Activated CD8-positive, alpha-beta T cell treated with anti-CD3 and anti-CD28 coated beads, Interleukin-2, amount 10 ng/mL, durations not matched to agents 7 days and 5 days (primary cell): ENCODE measurements at regions of chr3 and their contacts with region 1.

Region 1: DNA sequence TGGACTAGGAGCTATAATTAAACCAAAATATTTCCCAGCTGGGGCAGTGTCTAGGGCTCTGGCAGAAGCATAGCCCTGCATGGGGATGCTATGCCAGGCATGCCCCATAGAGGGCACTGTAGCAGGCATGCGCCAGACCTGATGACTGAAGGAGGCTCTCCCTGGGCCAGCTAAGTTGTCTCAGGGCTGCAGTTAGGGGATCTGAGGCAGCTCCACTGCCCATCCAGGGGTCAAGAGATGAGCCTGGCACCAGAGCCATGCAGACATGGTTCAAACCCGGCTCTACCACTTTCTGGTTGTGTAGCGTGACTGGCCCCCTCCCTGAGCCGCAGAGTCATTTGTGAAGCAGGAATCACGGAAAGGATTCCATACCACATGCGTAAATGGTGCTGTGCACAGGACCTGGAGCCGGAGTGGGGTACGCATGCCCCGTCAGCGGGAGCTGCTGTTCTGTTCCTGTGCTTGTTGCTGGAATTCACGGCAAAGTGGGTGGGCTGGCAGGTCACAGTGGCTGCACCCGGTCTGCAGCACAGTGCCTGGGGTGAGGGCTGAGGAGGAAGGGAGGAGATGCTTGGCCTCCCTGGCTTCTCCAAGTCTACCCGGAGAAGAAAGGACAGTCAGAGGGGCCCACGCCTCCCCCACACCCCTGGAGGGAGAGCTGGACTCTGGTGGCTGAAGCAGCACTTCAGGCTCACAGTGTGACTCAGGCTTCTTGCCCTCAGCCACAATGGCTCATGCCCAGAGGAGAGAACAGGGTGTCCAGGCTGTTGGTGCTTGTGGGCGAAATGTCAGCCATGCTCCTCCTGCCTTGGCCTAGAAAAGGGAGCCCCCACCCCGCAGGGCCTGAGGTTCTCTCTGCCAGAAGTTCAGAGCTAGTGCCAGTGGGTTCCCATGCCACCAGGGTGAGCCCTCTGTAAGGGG is 43.1 kb downstream of the DNASE1L3 start:
- DNase-seq: peak; percentile 75
- ATAC-seq: peak; percentile 78
- H3K4me3 Mint-ChIP-seq: no peak overlapping the region
- H3K27ac Mint-ChIP-seq: no peak overlapping the region
- H3K4me1 Mint-ChIP-seq: no peaks in the 10 kb centered on the region
- H3K27me3 Mint-ChIP-seq: no peaks in the 10 kb centered on the region

Region 2: DNA sequence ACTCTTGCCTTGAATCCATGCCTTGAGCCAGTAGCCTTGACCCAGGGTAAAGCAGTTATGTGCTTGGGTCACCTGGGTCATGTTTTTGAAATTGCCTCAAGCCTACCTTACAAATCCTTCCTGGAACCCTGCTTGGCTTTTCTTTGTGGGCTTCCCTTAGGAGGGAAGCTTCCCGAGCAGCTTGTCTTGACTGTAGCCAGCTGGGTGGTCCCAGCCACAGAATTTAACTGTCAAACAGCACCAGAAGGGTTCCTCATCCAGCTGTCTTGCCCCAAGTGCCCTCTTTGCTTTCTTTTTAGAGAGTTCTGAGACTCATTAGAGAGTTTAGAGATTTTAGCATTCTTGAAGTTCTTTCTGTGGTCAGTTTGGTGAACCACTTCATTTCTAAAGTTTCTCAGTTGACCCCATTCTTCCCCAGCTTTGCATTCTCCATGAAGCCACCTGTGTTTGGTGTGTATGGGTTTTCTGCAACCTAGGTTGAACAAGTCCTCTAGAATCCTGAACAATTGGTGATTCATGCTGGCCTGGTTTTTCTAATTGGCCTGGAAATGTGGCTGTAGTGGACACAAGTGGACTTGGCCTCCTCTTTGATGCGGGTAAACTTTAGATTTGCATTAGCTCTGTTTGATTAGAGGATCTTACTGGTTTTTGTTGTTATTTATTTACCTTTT is 125.9 kb before region 1 on chr3:
- CTCF ChIA-PET with region 1: interaction called, 12 read pairs
- POLR2A ChIA-PET with region 1: no interaction called
- DNase-seq: peak; percentile 28
- ATAC-seq: peak; percentile 62
- H3K4me3 Mint-ChIP-seq: no peak overlapping the region
- H3K27ac Mint-ChIP-seq: peak overlapping the region; percentile 54
- H3K4me1 Mint-ChIP-seq: peaks cover 33% of the 10 kb centered on the region
- H3K27me3 Mint-ChIP-seq: peaks cover 4% of the 10 kb centered on the region

Region 3: GRCh38 chr3:58177747-58178527 is 10.2 kb after region 1 on chr3:
- CTCF ChIA-PET with region 1: interaction called, 41 read pairs
- POLR2A ChIA-PET with region 1: no interaction called
- DNase-seq: peak; percentile 91
- ATAC-seq: peak; percentile 98
- H3K4me3 Mint-ChIP-seq: peak overlapping the region; percentile 60
- H3K27ac Mint-ChIP-seq: no peak overlapping the region
- H3K4me1 Mint-ChIP-seq: peaks cover 20% of the 10 kb centered on the region
- H3K27me3 Mint-ChIP-seq: peaks cover 2% of the 10 kb centered on the region